Activated CD4-positive, alpha-beta memory T cell treated with anti-CD3 and anti-CD28 coated beads for 36 hours (primary cell): ENCODE measurements at regions of chr4 and their contacts with region 1.

Region 1: DNA sequence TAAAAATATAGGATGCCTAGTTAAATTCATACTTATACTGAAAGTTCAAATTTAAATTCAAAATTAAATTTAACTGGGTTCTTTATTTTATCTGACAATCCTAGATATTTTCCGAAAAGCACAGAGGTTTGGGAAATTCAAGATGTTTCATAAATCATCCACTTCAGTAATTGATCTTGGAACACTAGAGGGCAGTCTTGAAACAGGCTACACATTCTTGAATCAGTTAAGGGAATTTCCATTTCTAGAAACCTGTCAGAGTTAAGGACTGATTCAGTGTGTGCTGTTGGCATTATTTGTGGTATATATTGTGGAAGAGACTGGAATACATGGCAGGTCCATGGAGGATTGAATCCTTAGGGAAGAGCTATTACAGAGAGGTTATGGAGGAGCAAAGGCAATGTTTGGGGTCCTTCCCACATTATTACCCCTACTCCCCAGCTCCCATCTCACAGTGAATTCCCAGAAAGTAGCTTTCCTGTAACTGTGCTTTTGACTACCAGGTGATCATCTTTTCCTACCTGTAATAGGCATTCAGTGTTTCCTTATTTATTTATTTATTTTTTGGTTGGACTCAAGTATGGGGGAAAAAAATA is 92.9 kb downstream of the EGF start:
- DNase-seq: no peak
- H3K4me3 Mint-ChIP-seq: no peak overlapping the region
- H3K27ac Mint-ChIP-seq: no peak overlapping the region
- H3K4me1 Mint-ChIP-seq: peaks cover 6% of the 10 kb centered on the region
- H3K27me3 Mint-ChIP-seq: no peaks in the 10 kb centered on the region

Region 2: DNA sequence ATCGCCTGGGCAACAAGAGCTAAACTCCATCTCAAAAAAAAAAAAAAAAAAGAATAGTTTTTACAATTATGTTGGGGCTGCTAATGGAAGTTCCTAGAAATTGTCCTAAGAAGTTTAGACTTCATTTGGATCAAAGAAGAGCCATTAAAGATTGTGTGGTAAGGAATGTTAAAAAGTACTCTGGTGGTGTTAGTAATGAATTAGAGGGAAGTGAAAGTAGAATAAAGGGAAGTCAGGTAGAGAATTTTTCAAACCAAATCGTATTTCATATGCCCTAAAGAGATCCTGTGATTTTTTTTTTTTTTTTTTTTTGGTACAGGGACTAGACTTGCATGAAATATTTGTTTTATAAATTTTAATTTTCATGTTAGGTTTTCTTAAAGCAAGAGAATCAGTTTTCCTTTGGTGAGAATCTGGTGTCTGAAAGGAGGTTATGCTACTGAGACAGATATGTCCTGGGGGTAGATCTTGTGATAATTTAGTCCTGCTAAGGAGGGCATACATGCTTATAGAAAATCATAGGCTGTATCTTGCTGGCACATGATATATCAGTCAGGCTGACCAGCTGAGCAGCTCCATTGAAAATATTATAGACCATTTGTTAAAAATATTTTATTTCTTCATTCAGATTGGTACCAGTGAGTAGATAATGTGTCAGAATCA is 561.2 kb before region 1 on chr4:
- CTCF ChIA-PET with region 1: no interaction called
- POLR2A ChIA-PET with region 1: no interaction called
- intact Hi-C with region 1: no loop called
- DNase-seq: no peak
- H3K4me3 Mint-ChIP-seq: no peak overlapping the region
- H3K27ac Mint-ChIP-seq: no peak overlapping the region
- H3K4me1 Mint-ChIP-seq: peaks cover 63% of the 10 kb centered on the region
- H3K27me3 Mint-ChIP-seq: no peaks in the 10 kb centered on the region

Region 3: DNA sequence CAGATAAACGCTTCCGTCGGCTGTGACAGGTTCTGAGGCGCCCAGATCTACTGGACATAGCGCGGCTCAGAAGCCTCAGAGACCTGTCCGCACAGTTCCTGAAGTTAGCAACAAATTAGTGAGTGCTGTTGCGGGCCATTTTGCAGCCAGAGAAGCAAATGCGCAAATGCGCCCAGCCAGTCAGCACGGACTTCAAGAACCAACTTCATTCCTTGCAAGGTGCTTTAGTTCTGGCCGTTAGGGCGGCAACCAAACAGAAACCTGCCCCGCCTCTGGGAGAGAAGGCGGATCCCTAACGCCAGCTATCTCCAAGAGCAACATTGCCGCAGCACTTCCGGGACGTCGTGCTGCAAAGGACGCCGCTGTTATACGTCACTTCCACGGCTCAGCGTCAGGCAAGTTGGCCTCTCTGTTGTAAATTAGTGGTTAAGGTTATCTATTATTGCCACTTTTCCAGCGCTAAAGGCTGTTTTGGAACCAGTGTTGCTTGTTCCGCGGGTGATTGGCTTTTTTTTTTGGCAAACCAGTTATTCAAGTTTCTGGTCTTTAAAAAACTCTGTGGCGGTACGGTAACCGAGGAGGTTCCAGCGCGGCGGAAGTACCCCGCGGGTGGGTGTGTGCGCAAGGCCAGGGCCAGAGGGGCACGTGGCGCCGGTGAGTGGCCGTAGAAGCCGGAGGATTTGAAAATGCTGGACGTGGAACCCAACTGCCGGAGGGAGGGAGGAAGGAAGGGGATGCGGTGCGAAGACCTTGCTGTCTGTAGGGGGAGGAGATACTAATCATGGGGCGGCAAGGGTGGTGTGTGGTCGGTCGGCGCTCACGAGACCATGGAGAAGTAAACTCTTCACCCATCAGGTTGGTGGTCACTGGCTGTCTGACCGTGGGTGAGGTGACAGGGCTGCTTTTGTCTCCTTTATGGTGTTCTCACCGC is 190.1 kb before region 1 on chr4 and contains the start of gene GAR1:
- CTCF ChIA-PET with region 1: no interaction called
- POLR2A ChIA-PET with region 1: no interaction called
- intact Hi-C with region 1: no loop called
- DNase-seq: peak; percentile 94
- H3K4me3 Mint-ChIP-seq: peak within 1 kb of the TSS; percentile 99
- H3K27ac Mint-ChIP-seq: peak within 1 kb of the TSS; percentile 96
- H3K4me1 Mint-ChIP-seq: peaks cover 39% of the 10 kb centered on the region
- H3K27me3 Mint-ChIP-seq: no peaks in the 10 kb centered on the region
- total RNA-seq, gene GAR1: 30.5 to 32.8 TPM

Region 4: DNA sequence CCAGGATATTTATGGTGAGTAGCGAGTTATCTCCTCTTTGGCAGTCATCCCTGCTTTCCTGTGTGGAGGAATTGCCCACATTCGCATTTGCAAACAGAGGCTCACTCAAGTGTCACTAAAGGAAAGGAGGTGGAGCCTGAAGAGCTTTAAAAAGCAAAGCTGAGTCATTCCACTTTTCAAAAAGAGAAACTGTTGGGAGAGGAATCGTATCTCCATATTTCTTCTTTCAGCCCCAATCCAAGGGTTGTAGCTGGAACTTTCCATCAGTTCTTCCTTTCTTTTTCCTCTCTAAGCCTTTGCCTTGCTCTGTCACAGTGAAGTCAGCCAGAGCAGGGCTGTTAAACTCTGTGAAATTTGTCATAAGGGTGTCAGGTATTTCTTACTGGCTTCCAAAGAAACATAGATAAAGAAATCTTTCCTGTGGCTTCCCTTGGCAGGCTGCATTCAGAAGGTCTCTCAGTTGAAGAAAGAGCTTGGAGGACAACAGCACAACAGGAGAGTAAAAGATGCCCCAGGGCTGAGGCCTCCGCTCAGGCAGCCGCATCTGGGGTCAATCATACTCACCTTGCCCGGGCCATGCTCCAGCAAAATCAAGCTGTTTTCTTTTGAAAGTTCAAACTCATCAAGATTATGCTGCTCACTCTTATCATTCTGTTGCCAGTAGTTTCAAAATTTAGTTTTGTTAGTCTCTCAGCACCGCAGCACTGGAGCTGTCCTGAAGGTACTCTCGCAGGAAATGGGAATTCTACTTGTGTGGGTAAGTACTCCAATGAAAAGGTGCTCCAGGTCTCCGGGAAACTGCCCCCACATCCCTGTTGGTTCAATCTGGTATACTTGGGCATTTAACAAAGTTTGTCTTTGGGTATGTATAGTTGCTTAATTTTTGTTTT is 92.6 kb before region 1 on chr4 and contains the start of gene EGF:
- CTCF ChIA-PET with region 1: no interaction called
- POLR2A ChIA-PET with region 1: no interaction called
- intact Hi-C with region 1: no loop called
- DNase-seq: no peak
- H3K4me3 Mint-ChIP-seq: no peak within 1 kb of the TSS
- H3K27ac Mint-ChIP-seq: no peak within 1 kb of the TSS
- H3K4me1 Mint-ChIP-seq: no peaks in the 10 kb centered on the region
- H3K27me3 Mint-ChIP-seq: peaks cover 15% of the 10 kb centered on the region
- total RNA-seq, gene EGF: not detected

Region 5: DNA sequence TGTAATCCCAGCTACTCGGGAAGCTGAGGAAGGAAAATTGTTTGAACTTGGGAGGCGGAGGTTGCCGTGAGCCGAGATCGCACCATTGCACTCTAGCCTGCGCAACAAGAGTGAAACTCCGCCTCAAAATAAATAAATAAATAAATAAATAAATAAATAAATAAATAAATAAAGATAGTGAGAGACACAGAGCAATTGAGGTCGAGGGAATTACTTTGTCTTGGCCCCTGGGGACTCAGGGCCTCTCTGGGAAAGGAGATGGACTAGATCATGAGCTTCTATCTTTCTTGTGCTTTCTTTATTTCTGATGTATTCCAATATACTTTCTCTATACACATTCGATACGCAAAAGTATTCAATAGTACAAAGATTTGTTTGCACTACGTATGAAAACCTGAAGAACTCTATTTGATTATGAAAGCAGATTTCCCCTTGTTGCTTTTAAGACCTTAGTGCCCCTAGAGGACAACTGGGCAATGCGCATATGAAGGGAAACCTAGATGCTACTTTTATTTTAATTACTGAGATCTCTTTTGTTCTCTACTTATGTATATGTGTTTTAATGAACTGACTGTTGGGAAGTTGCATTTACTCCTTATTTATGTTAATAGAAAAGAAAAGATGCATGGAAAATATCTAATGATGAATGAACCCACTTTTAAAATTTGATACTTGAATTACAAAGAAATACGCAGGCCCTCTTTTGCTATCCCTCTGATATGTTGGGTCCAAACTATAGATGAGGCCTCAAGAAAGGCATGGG is 205.6 kb after region 1 on chr4:
- CTCF ChIA-PET with region 1: interaction called, 7 read pairs
- POLR2A ChIA-PET with region 1: no interaction called
- intact Hi-C with region 1: loop called (anchors 1 kb)
- DNase-seq: peak; percentile 13
- H3K4me3 Mint-ChIP-seq: no peak overlapping the region
- H3K27ac Mint-ChIP-seq: no peak overlapping the region
- H3K4me1 Mint-ChIP-seq: peaks cover 2% of the 10 kb centered on the region
- H3K27me3 Mint-ChIP-seq: peaks cover 2% of the 10 kb centered on the region

Region 6: GRCh38 chr4:110310795-110311194 is 305.2 kb after region 1 on chr4:
- CTCF ChIA-PET with region 1: no interaction called
- POLR2A ChIA-PET with region 1: no interaction called
- intact Hi-C with region 1: loop called (anchors 2 kb)
- DNase-seq: no peak
- H3K4me3 Mint-ChIP-seq: no peak overlapping the region
- H3K27ac Mint-ChIP-seq: no peak overlapping the region
- H3K4me1 Mint-ChIP-seq: no peaks in the 10 kb centered on the region
- H3K27me3 Mint-ChIP-seq: peaks cover 6% of the 10 kb centered on the region

Region 7: DNA sequence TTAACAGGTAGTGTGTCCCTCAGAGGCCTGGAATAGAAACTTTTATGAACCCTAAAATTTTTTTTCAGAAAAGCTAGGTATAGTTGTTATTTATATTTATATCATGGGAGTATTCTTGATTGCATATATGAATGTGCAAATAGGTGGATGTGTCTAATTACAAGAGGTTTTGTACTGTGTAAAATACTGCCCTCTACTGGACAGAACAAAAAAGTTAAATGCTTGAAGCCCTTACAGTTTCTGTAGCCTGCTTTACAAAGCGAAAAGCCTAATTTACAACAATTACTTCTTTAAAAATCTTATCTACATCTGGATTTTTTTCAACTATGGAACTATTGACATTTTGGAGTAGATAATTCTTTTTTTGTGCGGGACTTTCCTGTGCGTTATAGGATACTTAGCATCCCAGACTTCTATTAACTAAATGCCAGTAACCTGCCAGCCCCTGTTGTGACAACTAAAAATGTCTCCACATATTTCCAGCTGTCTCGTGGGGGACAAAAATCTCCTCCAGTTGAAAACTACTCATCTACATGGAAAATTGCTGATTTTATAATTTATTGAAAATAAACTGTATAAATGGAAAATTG is 505.5 kb after region 1 on chr4:
- CTCF ChIA-PET with region 1: interaction called, 278 read pairs
- POLR2A ChIA-PET with region 1: no interaction called
- intact Hi-C with region 1: loop called (anchors 1 kb)
- DNase-seq: no peak
- H3K4me3 Mint-ChIP-seq: no peak overlapping the region
- H3K27ac Mint-ChIP-seq: no peak overlapping the region
- H3K4me1 Mint-ChIP-seq: peaks cover 9% of the 10 kb centered on the region
- H3K27me3 Mint-ChIP-seq: no peaks in the 10 kb centered on the region